Posterior vena cava (tissue), 2 donors: ENCODE measurements at regions of chr17 and their contacts with region 1.

Region 1: DNA sequence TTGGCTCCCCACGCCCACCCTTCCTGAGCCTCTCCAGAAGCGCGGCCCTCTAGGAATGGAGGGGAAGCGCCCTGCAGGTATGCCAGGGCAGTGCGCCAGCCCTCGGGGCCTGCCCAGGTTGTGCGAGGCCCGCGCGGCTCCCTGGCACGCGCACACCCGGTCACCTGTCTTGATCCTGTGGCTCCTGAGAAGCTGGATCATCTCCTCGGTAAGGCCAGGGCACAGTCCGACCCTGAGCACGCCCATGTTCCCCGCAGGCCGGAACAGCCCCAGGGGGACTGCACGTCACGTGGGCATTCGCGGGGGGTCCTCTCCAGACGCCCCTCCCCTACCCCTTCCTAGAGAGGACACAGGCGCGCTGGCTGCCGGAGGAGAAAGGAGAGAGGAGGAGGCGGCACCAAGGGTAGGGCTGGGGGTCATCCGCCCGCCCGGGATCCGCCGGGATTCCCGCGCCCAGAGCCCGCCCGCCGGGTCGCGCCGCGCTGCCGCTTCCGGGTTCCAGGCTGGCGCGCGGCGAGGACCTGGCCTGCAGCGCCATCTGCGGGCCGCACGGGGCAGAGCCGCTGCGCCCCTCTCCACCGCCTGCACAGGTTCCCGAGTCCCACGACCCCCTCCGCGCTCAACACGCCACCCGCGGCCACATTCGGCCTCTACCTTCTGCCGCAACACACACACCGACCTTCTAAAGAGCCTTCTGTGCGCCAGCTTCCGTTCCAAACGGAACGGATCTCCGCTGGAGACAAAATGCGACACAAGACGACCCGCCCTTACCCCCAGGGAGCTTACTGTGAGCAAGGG is at the start of gene RAD51D:
- DNase-seq: peak; percentile 91
- total RNA-seq, gene RAD51D: 10.5 to 10.8 TPM

Region 2: GRCh38 chr17:34420254-34420766 is 699.3 kb before region 1 on chr17:
- intact Hi-C with region 1: loop called in 1 of 2 experiments (anchors 10 kb)
- DNase-seq: no peak

Region 3: GRCh38 chr17:34533811-34534527 is 585.6 kb before region 1 on chr17:
- intact Hi-C with region 1: loop called in 1 of 2 experiments (anchors 10 kb)
- DNase-seq: no peak

Region 4: DNA sequence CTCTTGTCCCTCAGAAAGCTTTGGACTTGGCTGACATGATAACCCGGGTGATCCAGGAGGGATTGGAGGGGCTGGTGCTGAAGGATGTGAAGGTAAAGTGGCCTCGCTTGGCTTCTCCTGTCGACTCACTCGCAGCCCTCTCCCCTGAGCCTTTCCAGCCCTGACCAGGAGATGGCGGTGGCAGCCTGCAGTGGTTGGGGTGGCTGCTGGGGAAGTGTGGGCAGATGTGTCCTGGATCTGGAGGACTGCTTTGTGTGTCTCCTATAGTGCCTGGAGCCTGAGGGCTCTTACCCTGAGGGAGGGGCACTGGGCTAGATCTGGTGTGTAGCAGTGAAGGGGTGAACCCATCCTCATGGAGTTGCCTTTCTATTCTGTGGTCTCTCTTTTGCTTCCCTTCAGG is 121.4 kb before region 1 on chr17:
- intact Hi-C with region 1: loop called in 1 of 2 experiments (anchors 10 kb)
- DNase-seq: peak; percentile 90

Region 5: GRCh38 chr17:35141681-35142466 is 22.3 kb after region 1 on chr17 and contains the start of gene NLE1:
- intact Hi-C with region 1: no loop called
- DNase-seq: peak; percentile 94
- total RNA-seq, gene NLE1: 8.4 to 9.1 TPM